ENCODE measurements at regions of chr17 and their contacts with region 1.

Region 1: DNA sequence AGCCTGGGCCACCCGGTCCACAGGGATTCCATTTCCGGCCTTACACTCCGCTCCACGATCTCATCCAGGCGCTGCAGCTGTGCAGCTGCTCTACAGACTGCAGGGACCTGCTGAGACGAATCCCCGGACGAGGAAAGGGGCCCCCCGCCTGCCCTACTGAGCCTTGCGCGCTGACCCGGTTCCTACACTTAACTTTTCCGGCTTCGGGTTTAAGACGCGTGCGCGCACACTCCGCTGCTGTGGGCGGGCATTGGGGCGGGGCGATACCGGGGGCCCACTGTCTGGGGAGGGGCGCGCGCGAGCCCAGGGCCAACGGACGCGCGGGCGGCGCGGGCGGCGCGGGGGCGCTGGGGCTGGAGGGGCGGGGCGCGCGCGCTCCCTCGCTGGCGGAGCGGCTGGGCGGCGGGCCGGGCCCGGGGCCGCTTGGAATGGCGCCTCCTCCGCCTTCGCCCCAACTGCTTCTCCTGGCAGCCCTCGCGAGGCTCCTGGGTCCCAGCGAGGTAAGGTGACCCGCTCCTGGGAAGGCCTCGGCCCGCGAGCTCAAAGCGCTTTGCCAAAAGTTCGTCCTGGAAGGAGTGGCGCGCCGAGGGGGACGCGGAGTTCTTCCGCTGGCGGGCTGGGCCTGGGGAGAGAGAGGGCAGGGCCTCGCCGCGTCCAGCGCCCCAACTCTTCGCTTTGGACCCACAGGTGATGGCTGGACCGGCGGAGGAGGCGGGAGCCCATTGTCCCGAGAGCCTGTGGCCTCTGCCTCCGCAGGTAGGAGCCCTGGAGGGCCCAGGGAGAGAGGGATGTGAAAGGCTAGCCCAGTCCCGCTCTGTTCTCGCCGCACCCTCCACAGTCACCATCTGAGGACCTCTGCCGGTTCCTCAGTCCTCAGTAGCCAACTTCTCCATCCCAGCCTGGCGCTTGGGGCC is at the start of gene TP53I13:
- DNase-seq: peak; percentile 88
- ATAC-seq: peak; percentile 57
- H3K4me3 Mint-ChIP-seq: peak within 1 kb of the TSS; percentile 98
- H3K27ac Mint-ChIP-seq: peak within 1 kb of the TSS; percentile 98
- H3K4me1 Mint-ChIP-seq: peaks cover 26% of the 10 kb centered on the region
- H3K27me3 Mint-ChIP-seq: no peaks in the 10 kb centered on the region
- total RNA-seq, gene TP53I13: 154 to 155 TPM

Region 2: GRCh38 chr17:29557085-29557697 is 11.4 kb before region 1 on chr17:
- POLR2A ChIA-PET with region 1: interaction called, 12 read pairs
- DNase-seq: no peak
- ATAC-seq: no peak
- H3K4me3 Mint-ChIP-seq: no peak overlapping the region
- H3K27ac Mint-ChIP-seq: no peak overlapping the region
- H3K4me1 Mint-ChIP-seq: peaks cover 25% of the 10 kb centered on the region
- H3K27me3 Mint-ChIP-seq: no peaks in the 10 kb centered on the region

Region 3: GRCh38 chr17:29589524-29590410 is 21.2 kb after region 1 on chr17 and contains the start of gene GIT1:
- POLR2A ChIA-PET with region 1: interaction called, 45 read pairs
- DNase-seq: peak; percentile 92
- ATAC-seq: peak; percentile 64
- H3K4me3 Mint-ChIP-seq: peak within 1 kb of the TSS; percentile 97
- H3K27ac Mint-ChIP-seq: peak within 1 kb of the TSS; percentile 90
- H3K4me1 Mint-ChIP-seq: peaks cover 51% of the 10 kb centered on the region
- H3K27me3 Mint-ChIP-seq: no peaks in the 10 kb centered on the region
- total RNA-seq, gene GIT1: 73.3 to 73.4 TPM

Measured in activated naive CD8-positive, alpha-beta T cell treated with anti-CD3 and anti-CD28 coated beads, Interleukin-2, amount 10 ng/mL, durations not matched to agents 7 days and 5 days (primary cell).